ENCODE measurements at regions of chr6 and their contacts with region 1.

Region 1: DNA sequence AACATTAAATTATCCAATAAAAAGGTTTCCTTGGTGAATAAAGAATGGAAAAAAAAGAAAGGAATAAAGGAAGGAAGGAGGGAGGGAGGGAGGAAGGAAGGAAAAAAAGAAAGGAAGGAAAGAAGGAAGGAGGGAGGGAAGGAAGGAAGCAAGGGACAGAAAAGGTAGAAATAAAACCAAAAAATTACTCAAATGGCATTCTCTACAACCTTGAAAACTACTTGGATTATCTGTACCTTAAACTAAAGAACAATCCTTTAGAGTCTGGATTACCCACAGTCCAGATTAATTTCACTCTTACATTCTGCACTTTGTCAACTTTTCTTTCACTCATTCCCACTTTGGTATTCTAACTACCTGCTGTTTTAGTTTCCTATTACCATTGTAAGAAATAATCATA is 361.8 kb upstream of the ADGRB3 start:
- DNase-seq: no peak
- H3K4me3 ChIP-seq: no peak overlapping the region
- H3K27ac ChIP-seq: no peak overlapping the region
- H3K4me1 ChIP-seq: no peaks in the 10 kb centered on the region
- H3K27me3 ChIP-seq: no peaks in the 10 kb centered on the region
- CTCF ChIP-seq: no peak
- POLR2A ChIP-seq: no peak

Region 2: DNA sequence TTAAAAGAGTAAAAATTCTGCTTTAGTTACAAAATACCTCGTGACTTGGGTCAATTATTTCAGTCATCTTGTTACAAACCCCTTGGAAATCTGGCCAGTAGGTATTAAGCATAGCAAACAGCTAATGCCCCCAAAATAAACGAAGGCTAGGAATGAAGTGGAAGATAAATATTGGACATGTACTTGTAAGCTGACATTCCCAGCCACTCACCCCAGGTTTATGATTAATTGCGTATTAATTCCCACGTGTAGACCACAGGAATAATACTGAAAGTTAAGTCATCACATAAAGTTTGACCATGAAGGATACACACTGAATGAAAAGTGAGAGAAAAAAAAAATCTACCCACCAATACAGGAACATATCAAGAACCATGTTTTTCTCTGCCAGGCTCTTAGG is 574.8 kb before region 1 on chr6:
- CTCF ChIA-PET with region 1: no interaction called
- POLR2A ChIA-PET with region 1: no interaction called
- dilution Hi-C with region 1: no loop called
- intact Hi-C with region 1: no loop called
- DNase-seq: no peak
- H3K4me3 ChIP-seq: no peak overlapping the region
- H3K27ac ChIP-seq: no peak overlapping the region
- H3K4me1 ChIP-seq: no peaks in the 10 kb centered on the region
- H3K27me3 ChIP-seq: no peaks in the 10 kb centered on the region
- CTCF ChIP-seq: no peak
- POLR2A ChIP-seq: no peak

Region 3: DNA sequence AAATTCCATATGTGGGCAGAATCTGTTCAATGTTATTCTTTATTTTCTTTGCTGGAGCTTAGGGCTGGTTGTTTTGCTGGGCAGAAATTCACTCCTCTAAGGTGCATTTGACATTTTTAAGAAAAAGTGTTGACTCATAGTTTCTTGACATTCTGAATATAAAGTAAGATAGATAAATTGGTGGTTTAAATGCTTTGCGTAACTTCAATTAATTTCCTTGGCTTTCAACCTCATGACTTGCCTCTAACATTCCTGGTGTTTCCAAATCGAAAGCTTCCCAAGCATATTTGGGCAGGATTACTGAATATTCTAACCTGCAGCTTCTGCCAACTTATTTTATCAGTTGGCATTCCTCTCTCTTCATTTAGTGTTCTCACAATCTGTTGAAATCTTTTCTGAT is 356.9 kb before region 1 on chr6:
- CTCF ChIA-PET with region 1: no interaction called
- POLR2A ChIA-PET with region 1: no interaction called
- dilution Hi-C with region 1: no loop called
- intact Hi-C with region 1: loop called (anchors 5 kb)
- DNase-seq: no peak
- H3K4me3 ChIP-seq: no peak overlapping the region
- H3K27ac ChIP-seq: no peak overlapping the region
- H3K4me1 ChIP-seq: no peaks in the 10 kb centered on the region
- H3K27me3 ChIP-seq: no peaks in the 10 kb centered on the region
- CTCF ChIP-seq: no peak
- POLR2A ChIP-seq: no peak

Region 4: GRCh38 chr6:68200929-68201328 is 72.4 kb before region 1 on chr6:
- CTCF ChIA-PET with region 1: no interaction called
- POLR2A ChIA-PET with region 1: no interaction called
- dilution Hi-C with region 1: no loop called
- intact Hi-C with region 1: no loop called
- DNase-seq: no peak
- H3K4me3 ChIP-seq: no peak overlapping the region
- H3K27ac ChIP-seq: no peak overlapping the region
- H3K4me1 ChIP-seq: no peaks in the 10 kb centered on the region
- H3K27me3 ChIP-seq: no peaks in the 10 kb centered on the region
- CTCF ChIP-seq: no peak
- POLR2A ChIP-seq: no peak

Region 5: DNA sequence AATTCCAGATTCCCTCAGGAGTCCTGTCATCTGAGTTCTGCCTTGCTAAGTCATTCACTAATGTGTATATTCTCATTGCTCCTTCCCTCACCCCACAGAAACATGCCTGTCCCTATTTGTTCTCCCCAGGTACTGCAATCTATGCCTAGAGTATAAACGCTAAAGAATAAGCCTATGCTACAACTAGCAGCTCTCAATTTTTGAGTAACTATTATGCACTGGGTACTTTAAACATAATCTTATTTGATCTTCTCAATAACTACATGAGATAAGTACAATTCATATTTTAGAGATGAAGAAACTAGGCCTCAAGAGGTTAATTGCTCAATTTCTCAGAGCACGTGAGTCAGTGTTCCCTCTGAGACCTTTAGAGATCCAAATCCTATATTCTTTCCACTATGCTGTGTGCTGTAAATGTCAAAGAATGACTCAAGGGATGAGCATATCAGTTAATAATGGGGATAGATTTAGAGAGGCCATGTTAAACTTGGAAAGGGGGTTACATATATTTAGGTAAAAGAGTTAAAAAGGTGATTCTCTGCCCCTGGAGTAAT is 62.0 kb before region 1 on chr6:
- CTCF ChIA-PET with region 1: no interaction called
- POLR2A ChIA-PET with region 1: no interaction called
- dilution Hi-C with region 1: no loop called
- intact Hi-C with region 1: no loop called
- DNase-seq: no peak
- H3K4me3 ChIP-seq: no peak overlapping the region
- H3K27ac ChIP-seq: no peak overlapping the region
- H3K4me1 ChIP-seq: no peaks in the 10 kb centered on the region
- H3K27me3 ChIP-seq: no peaks in the 10 kb centered on the region
- CTCF ChIP-seq: no peak
- POLR2A ChIP-seq: no peak